Calu3 (cell line): ENCODE measurements at regions of chr2 and their contacts with region 1.

Region 1: GRCh38 chr2:81355436-81355835 is 1050.9 kb upstream of the LRRTM1 start:
- DNase-seq: no peak
- H3K4me3 Mint-ChIP-seq: no peak overlapping the region
- H3K27ac Mint-ChIP-seq: no peak overlapping the region
- H3K4me1 Mint-ChIP-seq: no peaks in the 10 kb centered on the region
- H3K27me3 Mint-ChIP-seq: no peaks in the 10 kb centered on the region
- CTCF ChIP-seq: no peak

Region 2: DNA sequence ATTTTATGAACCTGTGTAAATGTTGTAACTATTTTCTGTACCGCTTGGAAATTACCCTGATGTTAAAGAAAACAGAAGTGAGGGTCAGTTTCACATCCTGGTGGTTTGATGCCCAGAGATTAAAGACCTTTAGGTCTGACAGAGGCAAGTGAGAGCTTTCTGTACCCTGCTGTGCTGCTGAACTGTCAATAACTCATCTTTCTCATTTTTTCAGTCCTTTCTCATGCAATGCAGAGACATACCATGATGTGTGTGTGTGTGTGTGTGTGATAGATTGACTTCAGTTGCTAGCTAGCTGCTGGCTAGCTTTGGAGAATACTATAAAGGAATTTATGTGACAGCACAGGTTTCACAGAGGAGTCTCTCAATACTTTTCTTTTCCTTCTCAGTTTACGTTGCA is 974.7 kb after region 1 on chr2:
- CTCF ChIA-PET with region 1: no interaction called
- intact Hi-C with region 1: no loop called
- DNase-seq: no peak
- H3K4me3 Mint-ChIP-seq: no peak overlapping the region
- H3K27ac Mint-ChIP-seq: no peak overlapping the region
- H3K4me1 Mint-ChIP-seq: no peaks in the 10 kb centered on the region
- H3K27me3 Mint-ChIP-seq: no peaks in the 10 kb centered on the region
- CTCF ChIP-seq: no peak

Region 3: DNA sequence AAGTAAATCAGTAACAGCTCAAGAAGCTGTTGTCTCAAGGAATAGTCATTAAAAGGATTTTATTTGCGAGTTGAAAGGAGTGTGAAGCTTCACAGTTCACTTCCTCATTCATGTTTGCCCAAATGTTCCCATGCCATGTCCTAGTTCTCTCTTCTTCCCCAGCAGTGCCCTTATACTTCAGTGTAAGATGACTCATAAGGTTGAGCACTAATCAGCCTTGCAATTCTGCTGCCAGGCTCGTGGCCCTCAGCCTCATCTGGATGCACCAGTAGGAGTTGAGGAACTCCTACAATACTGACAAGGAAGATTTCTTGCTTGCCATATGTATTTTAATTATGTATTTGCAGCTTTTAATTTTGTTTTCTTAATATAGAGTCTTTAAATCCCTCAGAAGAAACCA is 1123.2 kb after region 1 on chr2:
- CTCF ChIA-PET with region 1: no interaction called
- intact Hi-C with region 1: loop called (anchors 10 kb)
- DNase-seq: no peak
- H3K4me3 Mint-ChIP-seq: no peak overlapping the region
- H3K27ac Mint-ChIP-seq: no peak overlapping the region
- H3K4me1 Mint-ChIP-seq: no peaks in the 10 kb centered on the region
- H3K27me3 Mint-ChIP-seq: no peaks in the 10 kb centered on the region
- CTCF ChIP-seq: no peak